CD4-positive, alpha-beta memory T cell (primary cell): ENCODE measurements at regions of chr4 and their contacts with region 1.

Region 1: DNA sequence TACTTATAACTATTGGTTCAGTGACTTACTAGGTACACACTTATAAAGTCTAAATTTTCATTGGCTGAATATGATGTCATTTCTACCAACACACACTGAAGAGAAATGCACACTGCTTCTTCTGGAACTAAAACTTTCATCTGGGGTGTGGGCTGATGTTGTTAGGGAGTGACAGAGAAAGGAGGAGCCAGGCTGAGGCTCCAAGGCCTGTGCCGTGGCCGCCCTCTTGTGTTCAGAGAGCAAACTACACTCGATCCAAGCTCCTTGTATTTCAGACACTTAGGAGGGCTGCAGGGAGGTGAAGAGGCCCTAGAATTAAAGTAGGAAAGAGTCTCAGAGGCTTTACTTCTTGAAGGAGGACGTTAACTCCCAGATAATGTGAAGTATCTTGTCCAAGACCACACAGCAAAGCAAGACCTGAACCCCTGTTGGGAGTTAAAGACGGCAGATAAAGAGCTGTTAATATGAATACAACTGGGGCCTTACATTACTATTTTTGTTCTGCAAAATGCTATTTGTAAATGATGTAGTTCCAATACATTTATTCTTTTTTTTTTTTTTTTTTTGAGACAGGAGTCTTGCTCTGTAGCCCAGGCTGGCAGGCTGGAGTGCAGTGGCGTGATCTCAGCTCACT is 137.5 kb downstream of the AFAP1 start:
- DNase-seq: peak; percentile 72 to 77 (median 75)
- H3K4me3 ChIP-seq: no peak overlapping the region
- H3K4me3 Mint-ChIP-seq: no peak overlapping the region
- H3K27ac ChIP-seq: no peak overlapping the region
- H3K27ac Mint-ChIP-seq: peak overlapping the region in 5 of 7 donors; percentile 3 to 37 (median 19)
- H3K4me1 ChIP-seq: peaks cover 11% of the 10 kb centered on the region
- H3K4me1 Mint-ChIP-seq: peaks cover 6 to 19% (median 11%) of the 10 kb centered on the region in 4 donors
- H3K27me3 ChIP-seq: no peaks in the 10 kb centered on the region
- H3K27me3 Mint-ChIP-seq: no peaks in the 10 kb centered on the region

Region 2: GRCh38 chr4:7607156-7607910 is 194.9 kb before region 1 on chr4:
- CTCF ChIA-PET with region 1: no interaction called
- POLR2A ChIA-PET with region 1: no interaction called
- intact Hi-C with region 1: no loop called
- DNase-seq: no peak
- H3K4me3 ChIP-seq: no peak overlapping the region
- H3K4me3 Mint-ChIP-seq: no peak overlapping the region
- H3K27ac ChIP-seq: no peak overlapping the region
- H3K27ac Mint-ChIP-seq: no peak overlapping the region
- H3K4me1 ChIP-seq: no peaks in the 10 kb centered on the region
- H3K4me1 Mint-ChIP-seq: no peaks in the 10 kb centered on the region
- H3K27me3 ChIP-seq: no peaks in the 10 kb centered on the region
- H3K27me3 Mint-ChIP-seq: peaks cover 2% of the 10 kb centered on the region in 2 donors

Region 3: GRCh38 chr4:7719354-7720174 is 82.6 kb before region 1 on chr4:
- CTCF ChIA-PET with region 1: no interaction called
- POLR2A ChIA-PET with region 1: no interaction called
- intact Hi-C with region 1: loop called (anchors 2 kb)
- DNase-seq: peak in 4 of 5 donors; percentile 33 to 46 (median 37)
- H3K4me3 ChIP-seq: no peak overlapping the region
- H3K4me3 Mint-ChIP-seq: no peak overlapping the region
- H3K27ac ChIP-seq: no peak overlapping the region
- H3K27ac Mint-ChIP-seq: peak overlapping the region in 1 of 7 donors; percentile 38
- H3K4me1 ChIP-seq: no peaks in the 10 kb centered on the region
- H3K4me1 Mint-ChIP-seq: peaks cover 0 to 7% (median 4%) of the 10 kb centered on the region in 4 donors
- H3K27me3 ChIP-seq: no peaks in the 10 kb centered on the region
- H3K27me3 Mint-ChIP-seq: peaks cover 1 to 9% of the 10 kb centered on the region in 2 donors

Region 4: GRCh38 chr4:7770224-7771050 is 31.8 kb before region 1 on chr4:
- CTCF ChIA-PET with region 1: interaction called, 4 read pairs
- POLR2A ChIA-PET with region 1: no interaction called
- intact Hi-C with region 1: loop called (anchors 1 kb)
- DNase-seq: no peak
- H3K4me3 ChIP-seq: no peak overlapping the region
- H3K4me3 Mint-ChIP-seq: peak overlapping the region in 7 of 8 donors; percentile 47 to 85 (median 72)
- H3K27ac ChIP-seq: peak overlapping the region; percentile 5
- H3K27ac Mint-ChIP-seq: peak overlapping the region; percentile 39 to 92 (median 85)
- H3K4me1 ChIP-seq: peaks cover 18% of the 10 kb centered on the region
- H3K4me1 Mint-ChIP-seq: peaks cover 17 to 39% (median 31%) of the 10 kb centered on the region in 4 donors
- H3K27me3 ChIP-seq: no peaks in the 10 kb centered on the region
- H3K27me3 Mint-ChIP-seq: no peaks in the 10 kb centered on the region

Region 5: GRCh38 chr4:7827991-7828720 is 25.9 kb after region 1 on chr4:
- CTCF ChIA-PET with region 1: interaction called, 66 read pairs
- POLR2A ChIA-PET with region 1: interaction called, 3 read pairs
- intact Hi-C with region 1: loop called (anchors 2 kb)
- DNase-seq: peak; percentile 47 to 90 (median 57)
- H3K4me3 ChIP-seq: peak overlapping the region in 1 of 2 donors; percentile 29
- H3K4me3 Mint-ChIP-seq: peak overlapping the region; percentile 5 to 86 (median 77)
- H3K27ac ChIP-seq: peak overlapping the region; percentile 55
- H3K27ac Mint-ChIP-seq: peak overlapping the region; percentile 88 to 97 (median 89)
- H3K4me1 ChIP-seq: peaks cover 53% of the 10 kb centered on the region
- H3K4me1 Mint-ChIP-seq: peaks cover 54 to 71% (median 61%) of the 10 kb centered on the region in 4 donors
- H3K27me3 ChIP-seq: no peaks in the 10 kb centered on the region
- H3K27me3 Mint-ChIP-seq: no peaks in the 10 kb centered on the region

Region 6: DNA sequence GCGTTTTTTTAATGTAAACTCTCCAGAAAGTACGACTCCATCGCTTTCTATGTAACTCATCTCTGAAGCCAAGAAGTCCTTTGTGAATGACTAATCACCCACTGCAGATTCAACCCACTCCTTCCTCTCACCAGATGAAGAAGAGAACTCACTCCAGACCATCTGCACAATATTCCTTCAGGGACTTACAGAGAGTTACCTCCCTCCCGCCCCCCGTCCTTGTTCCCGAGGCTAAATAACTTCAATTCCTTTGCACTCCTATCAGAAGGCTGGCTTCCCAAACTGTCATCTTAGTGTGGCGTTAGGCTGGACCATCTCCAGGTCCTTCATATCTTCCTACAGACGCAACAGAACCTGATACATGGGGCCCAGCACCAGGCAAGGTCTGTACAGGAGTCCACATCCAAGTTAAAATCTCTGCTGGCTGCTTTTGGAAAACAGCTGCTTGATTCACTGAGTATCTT is 55.1 kb after region 1 on chr4:
- CTCF ChIA-PET with region 1: interaction called, 4 read pairs
- POLR2A ChIA-PET with region 1: interaction called, 9 read pairs
- intact Hi-C with region 1: loop called (anchors 2 kb)
- DNase-seq: no peak
- H3K4me3 ChIP-seq: no peak overlapping the region
- H3K4me3 Mint-ChIP-seq: peak overlapping the region in 7 of 8 donors; percentile 1 to 78 (median 47)
- H3K27ac ChIP-seq: no peak overlapping the region
- H3K27ac Mint-ChIP-seq: peak overlapping the region; percentile 80 to 98 (median 96)
- H3K4me1 ChIP-seq: peaks cover 61% of the 10 kb centered on the region
- H3K4me1 Mint-ChIP-seq: peaks cover 41 to 73% (median 62%) of the 10 kb centered on the region in 4 donors
- H3K27me3 ChIP-seq: no peaks in the 10 kb centered on the region
- H3K27me3 Mint-ChIP-seq: no peaks in the 10 kb centered on the region

Region 7: GRCh38 chr4:7939377-7940108 is 137.3 kb after region 1 on chr4 and contains the start of gene AFAP1:
- CTCF ChIA-PET with region 1: interaction called, 17 read pairs
- POLR2A ChIA-PET with region 1: interaction called, 5 read pairs
- intact Hi-C with region 1: loop called (anchors 1 kb)
- DNase-seq: peak; percentile 86 to 94 (median 92)
- H3K4me3 ChIP-seq: peak within 1 kb of the TSS; percentile 58 to 61
- H3K4me3 Mint-ChIP-seq: peak within 1 kb of the TSS; percentile 66 to 88 (median 74)
- H3K27ac ChIP-seq: peak within 1 kb of the TSS; percentile 70
- H3K27ac Mint-ChIP-seq: peak within 1 kb of the TSS; percentile 23 to 83 (median 45)
- H3K4me1 ChIP-seq: peaks cover 16% of the 10 kb centered on the region
- H3K4me1 Mint-ChIP-seq: peaks cover 12 to 39% (median 26%) of the 10 kb centered on the region in 4 donors
- H3K27me3 ChIP-seq: no peaks in the 10 kb centered on the region
- H3K27me3 Mint-ChIP-seq: peaks cover 0 to 2% of the 10 kb centered on the region in 2 donors
- total RNA-seq, gene AFAP1: 18.8 to 21.8 TPM

Region 8: GRCh38 chr4:7987148-7987989 is 185.2 kb after region 1 on chr4:
- CTCF ChIA-PET with region 1: interaction called, 188 read pairs
- POLR2A ChIA-PET with region 1: no interaction called
- intact Hi-C with region 1: loop called (anchors 1 kb)
- DNase-seq: peak; percentile 67 to 71 (median 69)
- H3K4me3 ChIP-seq: no peak overlapping the region
- H3K4me3 Mint-ChIP-seq: no peak overlapping the region
- H3K27ac ChIP-seq: no peak overlapping the region
- H3K27ac Mint-ChIP-seq: no peak overlapping the region
- H3K4me1 ChIP-seq: peaks cover 5% of the 10 kb centered on the region
- H3K4me1 Mint-ChIP-seq: peaks cover 2 to 4% (median 4%) of the 10 kb centered on the region in 4 donors
- H3K27me3 ChIP-seq: no peaks in the 10 kb centered on the region
- H3K27me3 Mint-ChIP-seq: no peaks in the 10 kb centered on the region